Ascending aorta (tissue), 2 donors: ENCODE measurements at regions of chr5 and their contacts with region 1.

Region 1: DNA sequence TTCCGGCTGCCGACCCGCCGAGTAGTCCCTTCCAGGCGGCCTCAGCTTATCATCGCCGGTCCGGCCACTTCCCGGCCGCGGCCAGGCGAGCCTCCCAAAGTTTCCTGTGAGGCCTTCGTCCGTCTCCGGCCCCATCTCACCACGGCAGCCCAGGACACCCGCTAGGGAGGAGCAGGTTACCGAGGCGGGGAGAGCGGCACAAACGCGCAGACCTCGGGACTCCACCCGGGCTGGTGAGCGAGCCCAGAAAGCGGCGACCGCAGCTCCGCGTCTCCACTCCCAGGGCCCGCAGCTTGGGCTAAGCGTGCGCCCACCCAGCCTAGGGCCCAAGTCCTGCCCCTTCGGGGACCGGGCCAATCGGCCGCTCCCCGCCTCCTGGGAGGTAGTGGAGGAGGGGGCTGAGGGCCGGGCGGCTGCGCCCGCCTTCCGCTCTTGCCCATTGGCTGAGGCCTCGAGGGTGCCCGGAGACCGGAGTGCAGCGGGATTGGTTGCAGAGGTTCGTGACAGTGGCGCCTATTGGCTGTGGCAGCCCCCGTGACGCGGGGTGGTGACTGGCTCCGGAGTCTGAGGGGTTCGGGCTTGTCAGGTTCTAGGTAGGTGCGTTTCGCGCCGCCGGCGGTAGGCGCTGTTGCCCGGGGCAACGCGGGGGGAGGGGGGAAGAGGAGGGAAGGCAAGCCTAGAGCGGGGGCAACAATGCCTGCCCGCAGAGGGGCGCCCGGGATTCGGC is 867 bp downstream of the FER start:
- DNase-seq: peak; percentile 99 to 100
- H3K4me3 ChIP-seq: peak overlapping the region; percentile 85 to 86
- H3K27ac ChIP-seq: peak overlapping the region; percentile 99
- H3K4me1 ChIP-seq: peaks cover 0 to 5% of the 10 kb centered on the region in 2 donors
- H3K27me3 ChIP-seq: no peaks in the 10 kb centered on the region
- CTCF ChIP-seq: peak in 1 of 3 experiments; percentile 27

Region 2: DNA sequence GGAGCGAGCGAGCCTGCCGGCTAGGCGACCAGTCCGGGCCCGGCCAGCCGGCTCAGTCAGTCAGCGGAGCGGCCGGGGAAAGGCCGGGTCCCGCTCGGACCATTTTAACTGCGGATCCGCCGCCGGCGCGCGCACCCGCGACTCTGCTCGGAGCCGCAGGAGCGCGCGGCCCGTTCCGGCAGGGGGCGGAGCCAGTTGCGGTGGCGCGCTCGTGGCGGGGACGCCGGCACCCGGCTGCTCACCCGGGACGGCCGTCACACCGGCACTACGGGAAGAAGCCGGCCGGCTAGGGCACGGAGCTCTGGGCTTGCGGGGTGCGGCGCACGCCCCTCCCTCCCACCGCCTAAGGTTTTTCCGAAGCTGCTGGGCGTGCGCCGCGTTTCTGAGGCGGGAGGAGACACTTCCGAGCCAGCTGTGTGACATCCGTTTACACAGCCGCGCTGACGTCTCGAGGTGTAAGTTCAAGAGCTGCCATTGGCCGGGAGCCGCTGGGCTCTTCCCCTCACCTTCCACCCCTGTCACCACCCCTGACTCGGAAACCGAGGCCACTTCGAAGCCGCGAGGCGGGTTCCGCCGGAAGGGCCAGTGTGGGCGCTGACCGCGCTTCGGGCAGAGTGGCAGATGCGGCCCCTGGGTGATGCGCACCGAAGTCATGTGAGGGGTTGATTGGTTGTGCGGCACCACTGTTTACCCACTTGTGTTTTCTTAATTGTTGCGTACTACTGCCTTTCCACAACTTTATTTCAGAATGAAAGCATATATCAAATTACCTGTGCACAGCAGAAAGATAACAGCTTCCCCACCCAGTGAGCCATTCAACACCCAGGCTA is 366.4 kb before region 1 on chr5 and contains the start of gene FBXL17:
- intact Hi-C with region 1: loop called (anchors 5 kb)
- DNase-seq: peak; percentile 74 to 97
- H3K4me3 ChIP-seq: peak within 1 kb of the TSS; percentile 98 to 99
- H3K27ac ChIP-seq: peak within 1 kb of the TSS; percentile 100
- H3K4me1 ChIP-seq: peaks cover 4 to 14% of the 10 kb centered on the region in 2 donors
- H3K27me3 ChIP-seq: no peaks in the 10 kb centered on the region
- CTCF ChIP-seq: no peak
- total RNA-seq, gene FBXL17: 13.6 TPM

Region 3: DNA sequence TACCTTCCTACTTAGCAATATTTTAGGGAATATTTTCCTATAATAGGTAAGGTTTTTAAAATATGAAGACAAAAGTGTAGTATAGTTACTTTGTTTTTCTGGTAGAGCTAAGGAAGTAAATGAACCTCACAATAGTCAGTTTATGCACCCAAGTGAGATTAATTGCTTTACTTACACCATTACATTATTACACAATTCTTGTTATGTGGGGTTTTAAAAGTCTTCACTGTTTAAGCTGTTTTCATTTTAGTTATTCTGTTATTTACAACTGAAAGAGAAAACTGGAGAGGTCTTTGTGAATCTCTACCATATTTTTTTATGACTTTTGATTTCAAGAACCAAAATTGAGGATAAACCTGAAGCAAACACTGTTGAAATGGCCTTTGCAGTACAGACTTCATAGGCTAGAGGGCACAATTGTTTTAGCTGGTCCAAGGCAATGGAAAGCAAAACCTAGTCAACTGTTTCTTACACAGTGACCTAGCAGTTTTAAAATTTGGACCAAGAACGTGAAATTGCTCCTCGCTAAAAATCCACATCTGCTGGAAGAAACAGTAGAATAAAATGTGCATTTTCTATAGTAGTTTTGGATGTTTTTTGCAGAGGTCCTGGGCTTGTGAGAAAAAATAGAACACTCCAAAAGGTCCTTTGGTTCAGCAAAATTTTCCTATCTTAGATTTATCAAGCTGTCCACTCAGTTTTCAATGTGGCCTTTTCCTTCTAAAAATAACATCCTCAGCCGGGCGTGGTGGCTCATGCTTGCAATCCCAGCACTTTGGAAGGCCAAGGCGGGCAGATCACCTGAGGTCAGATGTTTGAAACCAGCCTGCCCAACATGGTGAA is 67.3 kb before region 1 on chr5:
- intact Hi-C with region 1: loop called (anchors 1 kb)
- DNase-seq: no peak
- H3K4me3 ChIP-seq: peak overlapping the region in 1 of 2 donors; percentile 27
- H3K27ac ChIP-seq: peak overlapping the region; percentile 55 to 67
- H3K4me1 ChIP-seq: no peaks in the 10 kb centered on the region
- H3K27me3 ChIP-seq: no peaks in the 10 kb centered on the region
- CTCF ChIP-seq: peak; percentile 72 to 86 (median 83)

Region 4: GRCh38 chr5:108884736-108885135 is 136.2 kb after region 1 on chr5:
- intact Hi-C with region 1: no loop called
- DNase-seq: no peak
- H3K4me3 ChIP-seq: no peak overlapping the region
- H3K27ac ChIP-seq: no peak overlapping the region
- H3K4me1 ChIP-seq: no peaks in the 10 kb centered on the region
- H3K27me3 ChIP-seq: no peaks in the 10 kb centered on the region
- CTCF ChIP-seq: no peak

Region 5: DNA sequence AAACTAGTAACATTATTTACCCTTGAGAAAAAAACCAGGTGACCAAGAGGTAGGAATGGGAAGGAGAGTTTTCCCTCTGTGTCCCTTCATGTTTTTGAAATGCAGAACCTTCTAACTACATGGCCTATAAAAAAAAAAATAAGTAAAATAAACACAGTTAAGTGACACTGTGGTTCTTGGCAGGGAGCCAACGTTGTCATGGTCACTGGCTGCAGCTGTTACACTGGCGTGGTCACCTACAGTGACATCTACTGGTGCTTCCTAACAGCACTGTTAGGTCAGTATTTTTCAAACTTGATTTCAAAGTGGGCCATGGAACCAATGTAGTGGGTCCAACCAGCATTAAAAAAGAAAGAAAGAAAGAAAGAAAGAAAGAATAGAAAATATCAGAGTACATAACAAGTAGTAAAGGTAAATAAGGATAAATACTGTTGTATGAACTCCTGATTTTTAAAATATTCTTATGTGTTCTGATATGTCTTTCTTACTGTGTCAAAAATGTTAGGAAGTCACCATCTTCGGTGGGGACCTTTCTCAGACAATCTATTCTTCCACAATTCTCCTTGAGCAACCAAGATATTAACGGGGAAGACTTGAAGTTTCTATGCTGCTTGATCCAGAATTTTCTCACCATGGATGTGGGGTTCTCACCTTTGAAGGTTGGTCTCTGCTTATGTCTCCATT is 720.3 kb after region 1 on chr5:
- intact Hi-C with region 1: loop called (anchors 5 kb)
- DNase-seq: peak; percentile 86 to 97
- H3K4me3 ChIP-seq: no peak overlapping the region
- H3K27ac ChIP-seq: no peak overlapping the region
- H3K4me1 ChIP-seq: peaks cover 2 to 4% of the 10 kb centered on the region in 2 donors
- H3K27me3 ChIP-seq: no peaks in the 10 kb centered on the region
- CTCF ChIP-seq: peak; percentile 61 to 81 (median 79)